Panc1 (cell line): ENCODE measurements at regions of chr11 and their contacts with region 1.

Region 1: DNA sequence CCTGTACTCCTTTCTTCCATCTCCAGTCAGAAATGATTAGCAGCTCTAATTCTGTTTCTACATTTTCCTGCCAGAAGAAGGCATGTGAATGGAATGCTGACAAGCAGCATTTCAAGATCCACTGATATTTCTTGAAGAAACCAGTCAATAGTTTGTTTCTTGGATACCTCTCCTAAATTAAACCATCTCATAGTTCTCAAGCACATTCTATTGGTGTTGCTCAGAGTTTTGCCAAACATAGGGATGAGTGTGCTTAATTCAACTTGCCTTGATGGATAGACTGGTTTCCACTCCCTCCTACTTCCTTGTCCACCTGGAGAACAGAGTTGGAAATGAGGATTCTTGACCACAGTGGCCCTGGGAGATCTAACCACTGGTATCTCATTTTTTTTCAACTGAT is 29.8 kb upstream of the DDX10 start:
- DNase-seq: no peak
- ATAC-seq: no peak
- H3K4me3 ChIP-seq: no peak overlapping the region
- H3K27ac ChIP-seq: no peak overlapping the region
- H3K4me1 ChIP-seq: no peaks in the 10 kb centered on the region
- H3K27me3 ChIP-seq: peaks cover 25% of the 10 kb centered on the region
- CTCF ChIP-seq: no peak

Region 2: DNA sequence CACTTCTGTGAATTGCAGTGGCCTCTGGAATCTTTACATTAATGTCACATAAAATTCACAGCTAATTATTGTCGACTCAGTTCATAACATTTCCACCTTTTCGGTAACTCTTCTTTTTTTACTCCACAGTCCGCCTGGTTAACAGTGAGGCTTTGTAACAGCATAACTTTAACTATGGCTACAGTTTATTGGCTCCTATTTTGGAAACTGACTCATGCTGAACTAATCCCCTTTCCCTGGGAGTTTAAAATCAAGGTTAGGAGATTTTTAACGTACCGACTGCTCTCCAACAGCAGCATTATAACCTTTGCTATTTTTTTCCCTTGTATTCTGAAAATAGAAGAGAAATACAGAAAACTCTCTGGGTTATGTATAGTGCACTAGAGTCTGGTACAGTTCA is 133.7 kb before region 1 on chr11:
- CTCF ChIA-PET with region 1: no interaction called
- POLR2A ChIA-PET with region 1: no interaction called
- in situ Hi-C with region 1: no loop called
- intact Hi-C with region 1: loop called (anchors 10 kb)
- DNase-seq: no peak
- ATAC-seq: no peak
- H3K4me3 ChIP-seq: no peak overlapping the region
- H3K27ac ChIP-seq: no peak overlapping the region
- H3K4me1 ChIP-seq: peaks cover 9% of the 10 kb centered on the region
- H3K27me3 ChIP-seq: no peaks in the 10 kb centered on the region
- CTCF ChIP-seq: no peak